ENCODE measurements at regions of chr10 and their contacts with region 1.

Region 1: DNA sequence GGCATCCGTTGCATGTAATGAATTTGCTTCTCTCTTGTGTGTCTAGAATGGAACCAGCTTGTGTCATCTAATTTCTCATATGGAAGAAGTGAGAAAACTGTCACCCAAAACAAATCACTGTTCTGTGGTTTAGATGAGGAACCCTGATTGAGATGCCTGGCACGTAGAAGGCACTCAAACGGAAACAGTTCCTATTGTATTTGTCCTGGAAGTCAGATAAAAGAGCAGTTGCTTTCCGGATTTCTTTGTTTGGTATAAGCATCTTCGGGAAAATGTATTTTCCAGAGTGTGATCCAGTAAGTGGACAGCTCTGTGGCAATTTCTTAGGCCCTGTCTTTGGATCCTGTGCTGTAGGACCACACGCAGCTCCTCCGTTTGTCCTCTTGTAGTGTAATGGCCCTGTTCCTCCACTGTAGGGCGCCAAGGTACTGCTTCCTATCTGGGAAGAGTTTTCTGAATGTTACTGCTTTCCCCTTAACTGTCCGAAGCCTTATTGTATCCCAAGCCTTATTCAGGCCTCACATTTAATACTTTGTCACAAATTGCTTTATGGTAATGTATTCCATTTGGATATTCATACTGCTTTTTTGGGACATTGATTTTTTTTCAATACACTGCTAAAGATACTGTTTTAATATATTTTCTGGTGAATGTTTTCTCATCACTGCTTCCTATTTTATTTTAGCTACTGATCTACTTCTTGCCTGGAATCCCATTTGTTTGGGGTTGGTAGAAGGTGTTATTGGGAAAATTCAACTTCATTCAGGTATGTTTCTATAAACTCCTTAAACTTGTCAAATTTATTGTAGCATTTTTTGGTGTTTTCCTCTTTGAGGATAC is 24.8 kb downstream of the INPP5F start:
- DNase-seq: peak; percentile 54 to 80
- ATAC-seq: peak; percentile 97 to 99
- H3K4me3 ChIP-seq: no peak overlapping the region
- H3K27ac ChIP-seq: no peak overlapping the region
- H3K4me1 ChIP-seq: peaks cover 8% of the 10 kb centered on the region
- CTCF ChIP-seq: peak; percentile 88
- EP300 ChIP-seq: no peak
- POLR2A ChIP-seq: no peak
- RAD21 ChIP-seq: peak; percentile 91 to 96

Region 2: GRCh38 chr10:119725828-119726675 is 24.6 kb before region 1 on chr10 and contains the start of gene INPP5F:
- CTCF ChIA-PET with region 1: interaction called, 18 read pairs
- POLR2A ChIA-PET with region 1: interaction called, 5 read pairs
- DNase-seq: peak; percentile 96 to 98
- ATAC-seq: peak; percentile 90 to 96
- H3K4me3 ChIP-seq: peak within 1 kb of the TSS; percentile 82
- H3K27ac ChIP-seq: peak within 1 kb of the TSS; percentile 77 to 96
- H3K4me1 ChIP-seq: peaks cover 13% of the 10 kb centered on the region; the same call in 2 of the 3 replicates
- CTCF ChIP-seq: peak; percentile 24; the same call in 1 of the 3 replicates
- EP300 ChIP-seq: no peak
- POLR2A ChIP-seq: no peak
- RAD21 ChIP-seq: no peak; a peak in 1 of 5 replicates
- polyA plus RNA-seq, gene INPP5F: 7.7 and 8.3 TPM in 2 replicates

Region 3: DNA sequence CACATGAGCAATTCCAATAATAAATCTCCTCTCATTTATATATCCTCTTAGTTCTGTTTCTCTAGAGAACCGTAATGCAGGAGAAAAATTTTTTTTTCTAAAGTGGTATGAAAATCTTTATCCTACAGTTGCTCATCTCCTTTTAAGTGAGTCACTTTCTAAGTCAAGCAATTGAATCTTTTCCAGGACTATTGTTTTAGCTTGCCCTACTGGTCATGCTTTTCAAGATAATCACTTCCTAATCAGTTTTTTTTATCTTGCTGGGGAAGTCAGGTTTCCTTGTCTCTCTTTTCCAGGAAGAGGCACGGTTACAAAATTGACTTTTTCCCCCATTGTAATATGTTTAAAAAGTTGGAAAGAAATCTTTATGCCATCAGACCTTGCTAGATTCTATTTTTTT is 19.3 kb after region 1 on chr10:
- CTCF ChIA-PET with region 1: interaction called, 19 read pairs
- POLR2A ChIA-PET with region 1: no interaction called
- DNase-seq: no peak
- ATAC-seq: no peak
- H3K4me3 ChIP-seq: no peak overlapping the region
- H3K27ac ChIP-seq: no peak overlapping the region
- H3K4me1 ChIP-seq: no peaks in the 10 kb centered on the region
- CTCF ChIP-seq: no peak
- EP300 ChIP-seq: no peak
- POLR2A ChIP-seq: no peak
- RAD21 ChIP-seq: no peak

Region 4: DNA sequence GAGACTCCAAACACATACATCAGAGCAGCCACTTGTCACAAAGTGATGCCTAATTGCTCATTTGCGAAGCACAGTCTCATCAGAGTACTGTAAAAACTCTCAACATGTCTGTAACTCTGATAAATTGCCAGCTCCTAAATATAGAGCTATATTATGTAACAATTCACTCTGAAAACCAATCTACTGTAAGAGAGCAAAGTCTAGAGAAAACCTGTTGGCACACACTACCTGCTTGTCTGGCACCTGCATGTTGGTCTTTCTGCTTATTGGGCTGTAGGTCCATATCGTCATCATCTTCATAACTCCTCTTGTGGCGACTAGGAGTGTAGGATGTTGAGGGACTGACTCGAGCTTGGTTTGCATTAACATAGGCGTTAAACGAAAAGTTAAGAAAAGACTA is 102.2 kb after region 1 on chr10:
- CTCF ChIA-PET with region 1: interaction called, 22 read pairs
- POLR2A ChIA-PET with region 1: no interaction called
- DNase-seq: no peak
- ATAC-seq: no peak
- H3K4me3 ChIP-seq: no peak overlapping the region
- H3K27ac ChIP-seq: no peak overlapping the region
- H3K4me1 ChIP-seq: peaks cover 17% of the 10 kb centered on the region
- CTCF ChIP-seq: no peak
- EP300 ChIP-seq: no peak
- POLR2A ChIP-seq: no peak
- RAD21 ChIP-seq: no peak

Region 5: GRCh38 chr10:119892188-119893065 is 141.8 kb after region 1 on chr10 and contains the start of gene SEC23IP:
- CTCF ChIA-PET with region 1: interaction called, 5 read pairs
- POLR2A ChIA-PET with region 1: interaction called, 11 read pairs
- DNase-seq: peak; percentile 93 to 98
- ATAC-seq: peak; percentile 97 to 99
- H3K4me3 ChIP-seq: peak within 1 kb of the TSS; percentile 98
- H3K27ac ChIP-seq: peak within 1 kb of the TSS; percentile 90 to 97
- H3K4me1 ChIP-seq: peaks cover 40% of the 10 kb centered on the region
- CTCF ChIP-seq: no peak
- EP300 ChIP-seq: no peak
- POLR2A ChIP-seq: peak; percentile 91
- RAD21 ChIP-seq: no peak
- polyA plus RNA-seq, gene SEC23IP: 62.5 and 75.6 TPM in 2 replicates